ENCODE measurements at regions of chr15 and their contacts with region 1.

Region 1: GRCh38 chr15:74438721-74439316 is 5.1 kb upstream of the SEMA7A start:
- DNase-seq: peak; percentile 41 to 64
- ATAC-seq: peak; percentile 40 to 73
- H3K4me3 ChIP-seq: no peak overlapping the region
- H3K27ac ChIP-seq: no peak overlapping the region
- H3K4me1 ChIP-seq: peaks cover 12 to 23% of the 10 kb centered on the region in 2 donors
- H3K27me3 ChIP-seq: no peaks in the 10 kb centered on the region
- CTCF ChIP-seq: peak; percentile 76 to 91 (median 84)
- POLR2A ChIP-seq: no peak

Region 2: DNA sequence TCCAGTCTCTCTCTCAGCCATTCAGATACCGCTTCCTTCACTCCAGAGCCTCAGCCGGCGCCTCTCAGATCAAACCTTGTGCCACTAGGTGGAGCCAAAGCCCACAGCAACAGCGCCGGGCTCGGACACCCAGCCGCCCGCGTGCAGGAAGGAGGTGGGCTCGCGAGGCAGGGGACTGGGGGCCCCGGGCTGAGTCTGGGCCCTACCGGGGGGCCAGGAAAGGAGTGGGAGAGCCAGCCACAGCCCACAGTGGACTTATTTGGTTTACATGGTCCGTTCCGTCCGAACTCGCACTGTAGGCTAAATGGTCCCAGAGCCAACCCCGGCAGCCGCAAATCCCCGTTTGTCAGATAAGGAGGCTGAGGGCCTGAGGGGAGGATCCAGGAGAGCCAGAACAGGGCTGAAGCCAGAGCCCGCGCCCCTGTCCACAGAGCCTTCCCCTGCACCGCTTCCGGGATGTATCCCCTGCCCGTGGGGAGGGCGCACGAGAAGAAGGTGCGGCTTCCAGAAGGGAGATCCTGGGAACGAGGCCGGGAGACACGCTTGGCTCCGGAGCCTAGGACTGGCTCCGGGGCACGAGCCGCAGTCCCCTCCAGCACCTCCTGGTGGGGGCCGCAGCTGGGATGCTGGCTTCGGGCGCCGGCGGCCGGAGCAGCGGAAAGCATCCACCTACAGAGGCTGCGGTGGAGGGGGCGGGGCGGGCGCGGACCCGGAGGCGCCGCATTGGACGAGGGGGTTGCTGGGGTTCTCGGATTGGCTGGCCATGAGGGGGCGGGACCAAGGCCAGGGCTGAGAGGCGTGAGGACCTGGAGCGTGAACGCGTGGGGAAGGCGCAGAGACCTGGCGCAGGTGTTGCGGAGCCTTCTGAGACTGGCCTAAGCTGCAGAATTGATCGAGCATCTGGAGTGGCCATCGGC is 64.8 kb before region 1 on chr15:
- in situ Hi-C with region 1: loop called in 1 of 4 experiments (anchors 5 kb)
- intact Hi-C with region 1: loop called (anchors 2 kb)
- DNase-seq: peak; percentile 83 to 91
- ATAC-seq: peak; percentile 92 to 93
- H3K4me3 ChIP-seq: peak overlapping the region; percentile 63 to 90 (median 72)
- H3K27ac ChIP-seq: no peak overlapping the region
- H3K4me1 ChIP-seq: peaks cover 10 to 15% of the 10 kb centered on the region in 2 donors
- H3K27me3 ChIP-seq: no peaks in the 10 kb centered on the region
- CTCF ChIP-seq: peak; percentile 59 to 92 (median 87)
- POLR2A ChIP-seq: no peak

Region 3: GRCh38 chr15:74382004-74382816 is 56.6 kb before region 1 on chr15:
- in situ Hi-C with region 1: loop called (anchors 5 kb)
- intact Hi-C with region 1: loop called (anchors 1 kb)
- DNase-seq: peak; percentile 59 to 79
- ATAC-seq: peak; percentile 80 to 92
- H3K4me3 ChIP-seq: no peak overlapping the region
- H3K27ac ChIP-seq: no peak overlapping the region
- H3K4me1 ChIP-seq: peaks cover 12 to 13% of the 10 kb centered on the region in 2 donors
- H3K27me3 ChIP-seq: no peaks in the 10 kb centered on the region
- CTCF ChIP-seq: peak; percentile 88 to 96 (median 94)
- POLR2A ChIP-seq: no peak

Measured in gastrocnemius medialis (tissue), 4 donors.